ENCODE measurements at regions of chr1 and their contacts with region 1.

Region 1: DNA sequence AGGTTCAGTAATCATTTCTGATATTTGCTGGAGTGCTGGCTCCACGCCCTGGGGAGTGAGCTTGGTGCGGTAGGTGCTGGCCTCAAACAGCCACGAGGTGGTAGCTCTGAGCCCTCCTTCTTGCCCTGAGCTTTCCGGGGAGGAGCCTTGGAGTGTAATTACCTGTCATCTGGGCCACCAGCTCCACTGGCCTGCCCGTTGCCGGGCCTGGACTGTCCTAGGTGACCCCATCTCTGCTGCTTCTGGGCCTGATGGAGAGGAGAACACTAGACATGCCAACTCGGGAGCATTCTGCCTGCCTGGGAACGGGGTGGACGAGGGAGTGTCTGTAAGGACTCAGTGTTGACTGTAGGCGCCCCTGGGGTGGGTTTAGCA is 9.1 kb downstream of the MYBPH start:
- DNase-seq: peak; percentile 53
- H3K4me3 ChIP-seq: no peak overlapping the region
- H3K27ac ChIP-seq: no peak overlapping the region
- H3K4me1 ChIP-seq: peaks cover 0 to 9% (median 4%) of the 10 kb centered on the region in 4 donors
- H3K27me3 ChIP-seq: no peaks in the 10 kb centered on the region
- CTCF ChIP-seq: peak in 4 of 5 experiments; percentile 12 to 32 (median 18)
- EP300 ChIP-seq: no peak
- POLR2A ChIP-seq: no peak

Region 2: GRCh38 chr1:201456499-201457309 is 1709.8 kb before region 1 on chr1:
- in situ Hi-C with region 1: no loop called
- intact Hi-C with region 1: loop called (anchors 5 kb)
- DNase-seq: peak; percentile 61
- H3K4me3 ChIP-seq: no peak overlapping the region
- H3K27ac ChIP-seq: peak overlapping the region; percentile 67 to 85 (median 78)
- H3K4me1 ChIP-seq: peaks cover 5 to 38% (median 14%) of the 10 kb centered on the region in 4 donors
- H3K27me3 ChIP-seq: no peaks in the 10 kb centered on the region
- CTCF ChIP-seq: no peak
- EP300 ChIP-seq: no peak
- POLR2A ChIP-seq: no peak

Region 3: DNA sequence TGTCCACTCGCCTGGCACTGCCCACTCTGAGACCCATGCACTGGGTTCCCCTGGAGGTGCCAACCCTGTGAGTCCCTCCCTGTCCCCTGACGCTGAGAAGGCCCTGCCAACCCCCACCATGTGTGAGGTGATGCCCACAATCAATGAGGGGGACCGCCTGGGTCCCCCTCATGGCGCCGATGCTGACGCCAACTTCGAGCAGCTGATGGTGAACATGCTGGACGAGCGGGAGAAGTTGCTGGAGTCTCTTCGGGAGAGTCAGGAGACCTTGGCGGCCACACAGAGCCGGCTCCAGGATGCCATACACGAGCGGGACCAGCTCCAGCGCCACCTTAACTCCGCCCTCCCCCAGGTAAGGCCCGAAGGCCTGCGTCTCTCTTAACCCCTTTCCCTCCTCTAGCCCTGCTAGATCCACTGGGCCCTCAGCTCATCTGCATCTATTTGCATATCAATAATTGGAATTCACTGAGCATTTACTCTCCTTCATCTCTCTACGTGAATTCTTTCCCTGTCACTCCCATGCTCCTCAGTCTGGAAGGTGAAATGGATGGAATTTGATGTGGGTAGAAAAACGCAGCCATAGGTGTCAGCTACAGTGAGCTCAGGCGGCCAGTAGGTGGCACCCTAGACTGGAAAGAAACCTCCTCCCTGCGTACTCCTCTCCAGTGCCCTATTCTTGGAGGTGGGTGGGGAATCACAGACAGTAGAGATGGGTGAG is 127.5 kb before region 1 on chr1:
- in situ Hi-C with region 1: no loop called
- intact Hi-C with region 1: loop called (anchors 1 kb)
- DNase-seq: peak; percentile 74
- H3K4me3 ChIP-seq: no peak overlapping the region
- H3K27ac ChIP-seq: peak overlapping the region in 3 of 4 donors; percentile 26 to 52 (median 43)
- H3K4me1 ChIP-seq: peaks cover 0 to 9% (median 1%) of the 10 kb centered on the region in 4 donors
- H3K27me3 ChIP-seq: no peaks in the 10 kb centered on the region
- CTCF ChIP-seq: peak; percentile 86 to 91 (median 88)
- EP300 ChIP-seq: no peak
- POLR2A ChIP-seq: no peak

Region 4: GRCh38 chr1:203252678-203253077 is 86.1 kb after region 1 on chr1:
- in situ Hi-C with region 1: no loop called
- intact Hi-C with region 1: no loop called
- DNase-seq: no peak
- H3K4me3 ChIP-seq: no peak overlapping the region
- H3K27ac ChIP-seq: no peak overlapping the region
- H3K4me1 ChIP-seq: no peaks in the 10 kb centered on the region
- H3K27me3 ChIP-seq: peaks cover 24% of the 10 kb centered on the region
- CTCF ChIP-seq: no peak
- EP300 ChIP-seq: no peak
- POLR2A ChIP-seq: no peak

Region 5: DNA sequence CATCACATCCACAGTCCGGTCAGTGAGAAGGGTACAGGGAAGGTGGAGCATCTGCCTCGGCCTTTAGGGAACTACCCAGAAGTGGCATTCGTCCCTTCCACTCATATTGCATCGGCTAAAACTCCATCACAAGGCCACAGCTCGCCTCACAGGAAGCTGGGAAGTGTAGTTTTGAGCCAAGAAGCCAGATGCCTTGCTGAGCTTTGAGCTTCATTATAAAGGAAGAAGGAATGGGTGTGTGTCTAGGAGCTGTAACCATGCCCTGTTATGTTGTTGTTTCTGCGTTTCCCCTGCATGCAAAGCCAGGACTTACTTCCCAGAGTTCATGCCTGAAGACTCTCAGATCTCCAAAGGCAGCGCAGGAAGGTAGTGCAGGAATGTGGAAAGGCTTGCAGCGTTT is 388.5 kb after region 1 on chr1:
- in situ Hi-C with region 1: no loop called
- intact Hi-C with region 1: no loop called
- DNase-seq: no peak
- H3K4me3 ChIP-seq: peak overlapping the region in 1 of 4 donors; percentile 8
- H3K27ac ChIP-seq: peak overlapping the region; percentile 84 to 90 (median 84)
- H3K4me1 ChIP-seq: peaks cover 8 to 46% (median 19%) of the 10 kb centered on the region in 4 donors
- H3K27me3 ChIP-seq: no peaks in the 10 kb centered on the region
- CTCF ChIP-seq: no peak
- EP300 ChIP-seq: no peak
- POLR2A ChIP-seq: no peak

Measured in transverse colon (tissue), 4 donors.